HCT116 (cell line): ENCODE measurements at regions of chr9 and their contacts with region 1.

Region 1: DNA sequence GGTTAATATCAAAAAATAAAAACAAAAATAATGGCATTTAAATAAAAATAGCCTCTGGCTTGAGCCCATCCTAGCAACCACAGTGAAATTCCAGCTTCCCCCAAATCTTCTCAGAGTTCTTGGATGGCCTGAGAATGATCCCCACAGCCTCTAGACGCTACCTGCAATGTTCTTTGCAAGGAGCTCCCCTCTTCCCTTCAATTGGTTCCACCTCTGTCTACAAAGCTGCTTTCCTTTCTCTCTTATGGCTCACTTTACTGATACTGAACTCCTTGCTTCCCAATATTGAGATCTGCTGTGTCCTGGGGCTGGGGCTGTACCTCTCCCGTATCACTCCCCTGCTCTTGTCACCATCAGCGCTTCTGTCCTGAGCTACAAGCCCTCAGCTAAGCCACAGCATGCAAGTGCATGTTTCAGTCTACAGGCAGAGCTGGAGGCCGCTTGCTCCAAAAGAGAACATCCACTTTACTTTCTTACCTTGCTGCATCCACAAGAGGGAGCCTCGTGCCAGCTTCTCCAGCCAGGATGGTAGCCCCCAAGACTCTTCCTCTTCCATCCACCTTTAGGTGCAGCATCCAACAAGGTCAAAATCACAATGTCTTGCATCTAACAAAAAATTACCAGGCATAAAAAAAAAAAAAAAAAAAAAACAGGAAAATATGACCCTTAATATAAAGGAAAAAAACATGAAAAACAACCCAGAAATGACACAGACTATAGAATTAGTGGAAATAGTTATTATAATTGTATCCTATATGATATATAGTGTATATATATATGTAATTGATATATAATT is 57.4 kb upstream of the PRSS3 start:
- DNase-seq: peak; percentile 64
- ATAC-seq: peak; percentile 91
- H3K4me3 ChIP-seq: no peak overlapping the region
- H3K27ac ChIP-seq: no peak overlapping the region
- H3K4me1 ChIP-seq: peaks cover 0 to 17% of the 10 kb centered on the region in 2 experiments; a peak in 1 of 4 replicates
- H3K27me3 ChIP-seq: no peaks in the 10 kb centered on the region
- CTCF ChIP-seq: peak; percentile 80 to 92 (median 81)
- POLR2A ChIP-seq: no peak
- RAD21 ChIP-seq: peak; percentile 89

Region 2: GRCh38 chr9:33623658-33624586 is 114.1 kb before region 1 on chr9:
- CTCF ChIA-PET with region 1: interaction called, 38 read pairs
- POLR2A ChIA-PET with region 1: no interaction called
- RAD21 ChIA-PET with region 1: interaction called in 1 of 2 experiments, 3 read pairs
- intact Hi-C with region 1: no loop called
- DNase-seq: peak; percentile 81
- ATAC-seq: peak; percentile 98
- H3K4me3 ChIP-seq: no peak overlapping the region
- H3K27ac ChIP-seq: no peak overlapping the region
- H3K4me1 ChIP-seq: peaks cover 3 to 25% of the 10 kb centered on the region in 2 experiments; a peak in 3 of 4 replicates
- H3K27me3 ChIP-seq: no peaks in the 10 kb centered on the region
- CTCF ChIP-seq: peak; percentile 77 to 98 (median 79)
- POLR2A ChIP-seq: no peak
- RAD21 ChIP-seq: peak; percentile 94

Region 3: DNA sequence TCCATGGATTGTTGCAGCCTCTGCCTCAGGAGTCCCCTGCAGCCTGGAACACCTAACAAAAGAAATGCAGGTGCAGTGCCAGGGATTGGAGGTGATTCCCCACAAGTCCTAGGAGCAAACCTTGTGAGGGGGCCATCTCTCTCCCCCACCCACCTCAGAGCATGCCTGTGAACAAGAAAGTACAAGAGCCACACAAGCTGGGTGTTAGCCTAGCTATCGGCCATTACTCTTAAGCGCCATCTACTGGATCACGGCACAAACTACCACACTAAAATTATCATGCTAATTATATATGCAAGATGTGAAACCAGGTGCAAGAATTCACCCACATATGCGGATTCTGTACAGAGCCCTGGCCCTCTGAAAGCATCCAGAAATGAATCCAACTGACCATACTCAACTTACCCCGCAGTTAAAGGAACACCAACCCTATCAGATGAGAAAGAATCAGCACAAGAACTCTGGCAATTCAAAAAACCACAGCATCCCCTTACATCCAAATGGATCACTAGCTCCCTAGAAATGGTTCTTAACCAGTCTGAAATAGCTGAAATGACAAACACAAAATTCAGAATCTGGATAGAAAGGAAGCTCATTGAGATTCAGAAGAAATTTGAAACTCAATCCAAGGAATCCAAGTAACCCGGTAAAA is 40.8 kb after region 1 on chr9:
- CTCF ChIA-PET with region 1: interaction called, 20 read pairs
- POLR2A ChIA-PET with region 1: no interaction called
- RAD21 ChIA-PET with region 1: interaction called, 5 to 8 read pairs
- intact Hi-C with region 1: loop called (anchors 1 kb)
- DNase-seq: peak; percentile 58
- ATAC-seq: peak; percentile 86
- H3K4me3 ChIP-seq: no peak overlapping the region
- H3K27ac ChIP-seq: no peak overlapping the region
- H3K4me1 ChIP-seq: peaks cover 2 to 25% of the 10 kb centered on the region in 2 experiments; a peak in 2 of 4 replicates
- H3K27me3 ChIP-seq: no peaks in the 10 kb centered on the region
- CTCF ChIP-seq: peak; percentile 78 to 90 (median 83)
- POLR2A ChIP-seq: no peak
- RAD21 ChIP-seq: peak; percentile 86

Region 4: GRCh38 chr9:33816327-33817252 is 78.6 kb after region 1 on chr9 and contains the start of gene UBE2R2:
- CTCF ChIA-PET with region 1: interaction called, 13 read pairs
- POLR2A ChIA-PET with region 1: no interaction called
- RAD21 ChIA-PET with region 1: interaction called in 1 of 2 experiments, 4 read pairs
- intact Hi-C with region 1: no loop called
- DNase-seq: peak; percentile 84
- ATAC-seq: peak; percentile 75
- H3K4me3 ChIP-seq: peak within 1 kb of the TSS; percentile 87 to 89
- H3K27ac ChIP-seq: peak within 1 kb of the TSS; percentile 99
- H3K4me1 ChIP-seq: peaks cover 28 to 54% of the 10 kb centered on the region in 2 experiments
- H3K27me3 ChIP-seq: no peaks in the 10 kb centered on the region
- CTCF ChIP-seq: no peak
- POLR2A ChIP-seq: peak; percentile 64
- RAD21 ChIP-seq: no peak
- total RNA-seq, gene UBE2R2: 47.0 TPM

Region 5: DNA sequence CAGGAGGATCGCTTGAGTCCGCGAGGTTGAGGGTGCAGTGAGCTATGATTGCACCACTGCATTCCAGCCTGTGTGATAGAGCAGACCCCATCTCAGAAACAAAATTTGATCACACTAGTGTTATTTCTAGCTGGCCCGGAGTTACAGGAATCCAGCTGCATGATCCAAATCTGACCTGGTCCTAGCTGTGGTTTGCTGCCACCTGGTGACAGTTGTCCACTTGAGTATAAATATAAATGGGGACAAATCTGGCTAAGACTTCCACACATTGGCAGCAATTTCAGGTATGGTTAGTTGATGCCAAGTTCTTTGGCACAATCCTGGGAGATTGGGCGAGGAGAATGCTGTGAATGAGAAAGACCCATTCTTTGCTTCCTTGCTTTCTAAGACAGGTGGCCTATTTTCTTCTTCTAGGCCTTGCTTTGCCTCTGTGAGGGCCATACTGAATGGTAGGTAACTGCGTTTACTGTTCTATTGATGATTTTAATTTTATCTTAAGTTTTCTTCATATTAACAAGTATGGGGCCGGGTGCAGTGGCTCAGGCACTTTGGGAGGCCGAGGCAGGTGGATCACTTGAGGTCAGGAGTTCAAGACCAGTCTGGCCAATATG is 114.3 kb after region 1 on chr9:
- CTCF ChIA-PET with region 1: interaction called, 34 read pairs
- POLR2A ChIA-PET with region 1: no interaction called
- RAD21 ChIA-PET with region 1: interaction called, 3 to 5 read pairs
- intact Hi-C with region 1: loop called (anchors 1 kb)
- DNase-seq: peak; percentile 43
- ATAC-seq: peak; percentile 88
- H3K4me3 ChIP-seq: no peak overlapping the region
- H3K27ac ChIP-seq: no peak overlapping the region
- H3K4me1 ChIP-seq: peaks cover 1 to 23% of the 10 kb centered on the region in 2 experiments; a peak in 3 of 4 replicates
- H3K27me3 ChIP-seq: no peaks in the 10 kb centered on the region
- CTCF ChIP-seq: peak; percentile 62 to 81 (median 71)
- POLR2A ChIP-seq: no peak
- RAD21 ChIP-seq: peak; percentile 82

Region 6: DNA sequence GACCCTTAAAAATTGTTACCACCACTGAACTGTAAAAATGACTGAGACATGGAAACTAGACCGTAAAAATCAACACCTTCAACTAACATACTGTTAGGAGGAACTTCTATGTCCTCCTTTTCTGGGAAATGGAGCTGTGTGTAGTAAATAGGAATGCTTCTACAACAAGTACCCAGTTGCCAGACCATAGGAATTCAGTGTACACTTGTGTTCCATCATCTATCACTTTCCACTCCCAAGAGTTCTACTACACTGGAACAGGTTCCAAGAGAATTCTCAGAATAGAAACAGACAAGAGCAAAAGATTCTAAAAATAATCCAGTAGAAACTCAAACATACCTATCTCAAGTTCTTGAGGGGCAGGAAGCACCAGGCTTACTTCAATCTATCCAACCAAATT is 287.1 kb after region 1 on chr9:
- CTCF ChIA-PET with region 1: interaction called, 3 read pairs
- POLR2A ChIA-PET with region 1: no interaction called
- RAD21 ChIA-PET with region 1: no interaction called
- intact Hi-C with region 1: loop called (anchors 2 kb)
- DNase-seq: no peak
- ATAC-seq: no peak
- H3K4me3 ChIP-seq: no peak overlapping the region
- H3K27ac ChIP-seq: no peak overlapping the region
- H3K4me1 ChIP-seq: 0 out of 4 replicates have a peak, but pooled peaks cover 0 to 2% of the 10 kb centered on the region in 2 experiments
- H3K27me3 ChIP-seq: no peaks in the 10 kb centered on the region
- CTCF ChIP-seq: no peak
- POLR2A ChIP-seq: no peak
- RAD21 ChIP-seq: no peak

Region 7: GRCh38 chr9:34072868-34073590 is 335.0 kb after region 1 on chr9:
- CTCF ChIA-PET with region 1: interaction called, 5 read pairs
- POLR2A ChIA-PET with region 1: no interaction called
- RAD21 ChIA-PET with region 1: interaction called, 3 to 4 read pairs
- intact Hi-C with region 1: loop called (anchors 5 kb)
- DNase-seq: no peak
- ATAC-seq: peak; percentile 9; the same call in 1 of the 2 replicates
- H3K4me3 ChIP-seq: no peak overlapping the region
- H3K27ac ChIP-seq: peak overlapping the region; percentile 53
- H3K4me1 ChIP-seq: peaks cover 17 to 24% of the 10 kb centered on the region in 2 experiments
- H3K27me3 ChIP-seq: no peaks in the 10 kb centered on the region
- CTCF ChIP-seq: no peak
- POLR2A ChIP-seq: no peak
- RAD21 ChIP-seq: no peak